ENCODE measurements at regions of chr13 and their contacts with region 1.

Region 1: GRCh38 chr13:114110091-114110829 is 22.2 kb downstream of the RASA3 start:
- DNase-seq: peak; percentile 91
- H3K4me3 Mint-ChIP-seq: peak overlapping the region; percentile 88
- H3K27ac Mint-ChIP-seq: peak overlapping the region; percentile 94
- H3K4me1 Mint-ChIP-seq: peaks cover 44% of the 10 kb centered on the region
- H3K27me3 Mint-ChIP-seq: no peaks in the 10 kb centered on the region

Region 2: GRCh38 chr13:113951246-113951999 is 158.8 kb before region 1 on chr13:
- intact Hi-C with region 1: loop called (anchors 1 kb)
- DNase-seq: peak; percentile 84
- H3K4me3 Mint-ChIP-seq: no peak overlapping the region
- H3K27ac Mint-ChIP-seq: no peak overlapping the region
- H3K4me1 Mint-ChIP-seq: no peaks in the 10 kb centered on the region
- H3K27me3 Mint-ChIP-seq: no peaks in the 10 kb centered on the region

Region 3: DNA sequence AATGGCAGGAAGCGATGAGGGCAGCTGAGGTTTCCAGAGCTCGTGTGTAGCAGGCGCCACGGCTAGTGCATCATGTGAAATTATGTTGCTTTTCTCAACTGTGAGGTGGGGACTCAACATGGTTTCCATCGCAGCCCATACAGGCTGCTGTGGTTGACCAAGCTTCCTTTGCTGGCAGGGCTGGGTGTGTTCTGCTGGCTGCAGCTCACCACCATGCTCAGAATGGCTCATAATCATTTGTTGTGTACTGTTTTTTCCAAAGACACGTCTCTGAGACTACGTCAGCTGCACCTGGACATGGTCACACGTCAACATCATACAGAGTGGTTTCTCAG is 38.2 kb after region 1 on chr13:
- intact Hi-C with region 1: loop called (anchors 2 kb)
- DNase-seq: peak; percentile 97
- H3K4me3 Mint-ChIP-seq: peak overlapping the region; percentile 77
- H3K27ac Mint-ChIP-seq: peak overlapping the region; percentile 88
- H3K4me1 Mint-ChIP-seq: peaks cover 78% of the 10 kb centered on the region
- H3K27me3 Mint-ChIP-seq: no peaks in the 10 kb centered on the region